Panc1 (cell line): ENCODE measurements at regions of chr5 and their contacts with region 1.

Region 1: GRCh38 chr5:73739650-73740049 is 113.7 kb downstream of the ARHGEF28 start:
- DNase-seq: no peak
- ATAC-seq: no peak
- H3K4me3 ChIP-seq: no peak overlapping the region
- H3K27ac ChIP-seq: no peak overlapping the region
- H3K4me1 ChIP-seq: peaks cover 5% of the 10 kb centered on the region; the same call in 1 of the 2 replicates
- H3K27me3 ChIP-seq: no peaks in the 10 kb centered on the region
- CTCF ChIP-seq: no peak

Region 2: GRCh38 chr5:73152411-73153388 is 587.0 kb before region 1 on chr5:
- CTCF ChIA-PET with region 1: no interaction called
- POLR2A ChIA-PET with region 1: no interaction called
- in situ Hi-C with region 1: no loop called
- intact Hi-C with region 1: no loop called
- DNase-seq: no peak
- ATAC-seq: no peak
- H3K4me3 ChIP-seq: no peak overlapping the region
- H3K27ac ChIP-seq: no peak overlapping the region
- H3K4me1 ChIP-seq: no peaks in the 10 kb centered on the region
- H3K27me3 ChIP-seq: no peaks in the 10 kb centered on the region
- CTCF ChIP-seq: peak; percentile 27

Region 3: GRCh38 chr5:73638344-73639095 is 101.1 kb before region 1 on chr5:
- CTCF ChIA-PET with region 1: no interaction called
- POLR2A ChIA-PET with region 1: interaction called, 10 read pairs
- in situ Hi-C with region 1: no loop called
- intact Hi-C with region 1: no loop called
- DNase-seq: peak; percentile 83
- ATAC-seq: peak; percentile 74
- H3K4me3 ChIP-seq: peak overlapping the region; percentile 2 to 32; a peak in 3 of 4 replicates
- H3K27ac ChIP-seq: peak overlapping the region; percentile 85
- H3K4me1 ChIP-seq: peaks cover 83% of the 10 kb centered on the region
- H3K27me3 ChIP-seq: no peaks in the 10 kb centered on the region
- CTCF ChIP-seq: no peak